Activated T-helper 1 cell treated with anti-CD3 and anti-CD28 coated beads, Interleukin-12 subunit alpha, Interleukin-12 subunit beta, Interleukin-2, Interleukin-4 antibody, amounts not matched to agents 30 ng/mL and 10 ng/mL and 1 ng/mL, durations not matched to agents 14 hours and 24 hours and 36 hours (primary cell): ENCODE measurements at regions of chr9 and their contacts with region 1.

Region 1: DNA sequence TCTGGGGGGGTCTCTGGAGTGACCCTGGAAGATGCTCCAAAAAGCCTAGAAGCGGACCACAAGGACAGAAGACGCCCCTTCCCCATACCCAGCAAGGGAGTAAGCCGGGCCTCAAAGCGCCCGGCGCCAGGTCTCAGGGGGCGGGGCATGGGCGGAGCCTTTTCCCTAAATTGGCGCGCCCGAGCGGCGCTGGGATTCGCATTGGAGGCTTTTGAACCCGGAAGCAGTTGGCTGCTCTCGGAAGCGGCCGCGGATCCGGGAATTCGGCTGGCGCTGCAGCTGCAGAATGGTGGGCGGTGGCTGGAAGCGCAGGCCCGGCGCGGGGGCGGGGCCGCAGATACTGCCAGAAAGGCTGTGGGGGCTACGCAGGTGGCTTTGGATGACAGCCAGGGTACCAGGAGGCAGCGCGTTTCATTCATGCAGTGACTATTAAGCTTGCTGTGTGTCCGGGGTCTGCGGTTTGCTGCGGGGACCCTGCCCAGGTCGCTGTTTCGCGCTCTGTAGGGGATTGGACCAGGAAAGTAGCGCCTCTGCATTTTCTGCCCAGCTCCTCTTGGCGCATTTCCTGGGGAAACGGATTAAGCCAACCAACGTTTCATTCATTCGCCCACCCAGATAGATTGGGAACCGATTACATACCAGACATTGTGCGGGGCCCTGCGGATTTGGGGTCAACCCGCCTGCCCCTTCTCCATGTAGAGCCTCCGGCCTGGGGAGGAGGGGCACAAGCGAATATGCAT is 83.0 kb upstream of the FREM1 start:
- DNase-seq: peak; percentile 32
- H3K4me3 Mint-ChIP-seq: peak overlapping the region; percentile 73
- H3K27ac Mint-ChIP-seq: peak overlapping the region; percentile 41
- H3K4me1 Mint-ChIP-seq: peaks cover 39% of the 10 kb centered on the region
- H3K27me3 Mint-ChIP-seq: peaks cover 2% of the 10 kb centered on the region

Region 2: DNA sequence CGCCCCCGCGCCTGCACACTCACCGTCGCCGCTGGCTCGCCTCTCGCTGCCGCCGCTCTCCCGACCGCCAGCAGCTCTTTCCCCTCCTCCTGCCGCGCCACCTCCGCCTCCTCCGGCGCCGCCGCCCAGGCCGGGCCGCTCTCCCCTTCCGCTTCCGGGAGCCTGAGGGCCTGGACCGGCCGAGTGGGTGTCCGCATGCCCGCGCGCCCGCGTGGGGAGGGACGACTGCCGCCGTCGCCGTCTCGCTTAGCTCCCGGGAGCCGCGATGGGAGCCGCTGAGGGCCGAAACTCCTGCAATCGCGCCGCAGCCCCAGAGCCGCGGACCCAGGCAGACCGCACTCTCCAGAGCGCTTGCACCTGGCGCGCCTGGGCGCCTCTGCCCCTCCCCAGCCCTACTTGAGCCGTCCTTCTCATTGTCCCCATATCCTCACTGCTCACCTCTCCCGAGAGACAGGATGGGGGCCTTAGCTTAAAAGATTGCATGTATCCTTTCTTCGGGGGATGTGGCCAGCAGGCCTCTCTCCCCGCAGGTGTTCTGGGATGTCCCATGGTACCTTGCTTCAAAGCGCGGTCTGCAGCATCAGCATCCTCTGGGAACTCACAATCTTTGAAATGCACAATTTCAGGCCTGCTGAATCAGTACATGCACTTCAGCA is 299.9 kb before region 1 on chr9 and contains the start of gene ZDHHC21:
- intact Hi-C with region 1: no loop called
- DNase-seq: peak; percentile 53
- H3K4me3 Mint-ChIP-seq: peak within 1 kb of the TSS; percentile 97
- H3K27ac Mint-ChIP-seq: peak within 1 kb of the TSS; percentile 97
- H3K4me1 Mint-ChIP-seq: peaks cover 43% of the 10 kb centered on the region
- H3K27me3 Mint-ChIP-seq: peaks cover 12% of the 10 kb centered on the region
- total RNA-seq, gene ZDHHC21: 12.7 and 13.7 TPM in 2 replicates

Region 3: DNA sequence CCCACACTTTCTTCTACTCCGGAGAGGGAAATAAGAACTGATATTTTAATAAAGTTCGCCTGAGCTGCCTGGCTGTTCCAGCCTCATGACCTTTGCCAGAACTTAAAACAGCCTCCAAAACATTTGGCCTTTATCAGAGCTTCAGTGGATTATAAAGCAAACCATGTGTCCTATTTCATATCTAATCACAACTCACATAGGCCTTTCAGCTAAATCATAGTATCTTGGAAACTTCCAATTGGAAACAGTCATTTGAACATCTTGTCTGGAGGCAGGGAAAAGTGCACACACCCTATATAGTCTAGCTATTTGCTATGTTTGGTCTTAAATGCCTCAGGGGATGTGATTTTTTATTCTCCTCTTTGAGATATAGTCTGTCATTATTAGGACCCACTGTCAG is 37.0 kb before region 1 on chr9:
- intact Hi-C with region 1: loop called (anchors 1 kb)
- DNase-seq: no peak
- H3K4me3 Mint-ChIP-seq: no peak overlapping the region
- H3K27ac Mint-ChIP-seq: no peak overlapping the region
- H3K4me1 Mint-ChIP-seq: peaks cover 39% of the 10 kb centered on the region
- H3K27me3 Mint-ChIP-seq: peaks cover 10% of the 10 kb centered on the region